ENCODE measurements at regions of chr1 and their contacts with region 1.

Region 1: DNA sequence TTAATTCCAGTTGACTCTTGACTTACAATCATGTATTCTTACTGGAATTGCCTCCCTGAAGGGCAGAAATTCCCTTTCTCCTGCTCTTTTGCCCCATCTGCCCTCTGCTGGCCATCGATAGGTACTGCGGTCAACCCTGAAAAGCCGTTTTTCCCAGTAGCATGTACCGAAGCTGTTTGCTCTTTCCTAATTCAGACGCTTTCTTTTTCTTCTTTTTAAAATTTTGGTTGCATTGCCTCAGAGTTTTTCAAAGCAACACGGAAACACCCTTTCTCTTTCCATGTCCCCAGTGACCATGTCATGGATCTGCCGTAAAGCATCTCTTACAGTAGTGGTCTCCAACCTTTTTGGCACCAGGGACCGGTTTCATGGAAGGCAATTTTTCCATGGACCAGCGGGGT is 164.2 kb upstream of the C1orf21 start:
- DNase-seq: peak; percentile 20
- H3K4me3 ChIP-seq: no peak overlapping the region
- H3K27ac ChIP-seq: no peak overlapping the region
- H3K4me1 ChIP-seq: no peaks in the 10 kb centered on the region
- H3K27me3 ChIP-seq: no peaks in the 10 kb centered on the region
- CTCF ChIP-seq: peak; percentile 85 to 93 (median 90)
- POLR2A ChIP-seq: no peak

Region 2: GRCh38 chr1:184350573-184350972 is 127.9 kb after region 1 on chr1:
- intact Hi-C with region 1: no loop called
- DNase-seq: no peak
- H3K4me3 ChIP-seq: no peak overlapping the region
- H3K27ac ChIP-seq: peak overlapping the region in 1 of 2 donors; percentile 53
- H3K4me1 ChIP-seq: no peaks in the 10 kb centered on the region
- H3K27me3 ChIP-seq: no peaks in the 10 kb centered on the region
- CTCF ChIP-seq: no peak
- POLR2A ChIP-seq: no peak

Region 3: DNA sequence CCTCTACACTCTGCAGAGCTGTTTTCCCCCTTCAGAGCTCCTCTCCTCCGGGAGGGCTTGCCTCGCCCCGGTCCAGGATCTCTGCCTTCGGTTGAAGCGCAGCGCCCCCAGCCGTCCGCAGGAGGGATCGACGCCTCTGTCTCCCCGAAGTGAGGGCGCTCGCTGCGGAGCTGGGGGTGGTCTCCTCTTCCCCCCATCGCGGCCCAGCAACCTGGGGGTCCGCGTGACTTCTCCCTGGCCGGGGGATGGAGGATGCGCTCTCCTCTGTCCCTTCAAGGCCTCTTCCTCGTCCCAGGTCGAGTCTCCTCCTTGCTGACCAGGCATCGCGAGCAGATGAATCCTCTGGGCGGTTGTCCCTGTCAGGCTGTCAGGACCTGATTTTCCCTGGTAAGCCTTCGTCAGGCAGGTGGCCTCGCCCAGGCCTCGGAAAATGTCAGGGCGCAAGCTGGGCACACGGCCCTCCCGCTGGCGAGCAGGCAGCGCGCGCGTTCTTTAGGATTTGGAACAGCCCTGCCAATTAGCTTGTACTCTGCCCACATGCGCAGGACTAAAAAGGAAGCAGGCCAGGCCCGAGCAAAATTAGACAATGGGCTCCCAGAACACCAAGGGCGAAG is 441.5 kb after region 1 on chr1:
- intact Hi-C with region 1: loop called (anchors 10 kb)
- DNase-seq: peak; percentile 73
- H3K4me3 ChIP-seq: peak overlapping the region in 1 of 2 donors; percentile 14
- H3K27ac ChIP-seq: peak overlapping the region; percentile 34 to 47
- H3K4me1 ChIP-seq: peaks cover 15% of the 10 kb centered on the region
- H3K27me3 ChIP-seq: no peaks in the 10 kb centered on the region
- CTCF ChIP-seq: peak; percentile 82 to 90 (median 86)
- POLR2A ChIP-seq: no peak

Measured in prostate gland (tissue), 2 donors.